Activated T-helper 1 cell treated with anti-CD3 and anti-CD28 coated beads, Interleukin-12 subunit alpha, Interleukin-12 subunit beta, Interleukin-2, Interleukin-4 antibody, amounts not matched to agents 30 ng/mL and 10 ng/mL and 1 ng/mL, durations not matched to agents 14 hours and 24 hours and 36 hours (primary cell): ENCODE measurements at regions of chr1 and their contacts with region 1.

Region 1: GRCh38 chr1:8423650-8424538 is 106.0 kb downstream of the SLC45A1 start:
- DNase-seq: peak; percentile 32
- H3K4me3 Mint-ChIP-seq: peak overlapping the region; percentile 91
- H3K27ac Mint-ChIP-seq: peak overlapping the region; percentile 92
- H3K4me1 Mint-ChIP-seq: peaks cover 44% of the 10 kb centered on the region
- H3K27me3 Mint-ChIP-seq: no peaks in the 10 kb centered on the region

Region 2: GRCh38 chr1:8396786-8397406 is 27.0 kb before region 1 on chr1:
- intact Hi-C with region 1: loop called (anchors 1 kb)
- DNase-seq: no peak
- H3K4me3 Mint-ChIP-seq: no peak overlapping the region
- H3K27ac Mint-ChIP-seq: peak overlapping the region; percentile 71
- H3K4me1 Mint-ChIP-seq: peaks cover 63% of the 10 kb centered on the region
- H3K27me3 Mint-ChIP-seq: no peaks in the 10 kb centered on the region

Region 3: GRCh38 chr1:8510041-8510823 is 86.3 kb after region 1 on chr1:
- intact Hi-C with region 1: loop called (anchors 1 kb)
- DNase-seq: peak; percentile 47
- H3K4me3 Mint-ChIP-seq: peak overlapping the region; percentile 54
- H3K27ac Mint-ChIP-seq: peak overlapping the region; percentile 88
- H3K4me1 Mint-ChIP-seq: peaks cover 47% of the 10 kb centered on the region
- H3K27me3 Mint-ChIP-seq: no peaks in the 10 kb centered on the region

Region 4: DNA sequence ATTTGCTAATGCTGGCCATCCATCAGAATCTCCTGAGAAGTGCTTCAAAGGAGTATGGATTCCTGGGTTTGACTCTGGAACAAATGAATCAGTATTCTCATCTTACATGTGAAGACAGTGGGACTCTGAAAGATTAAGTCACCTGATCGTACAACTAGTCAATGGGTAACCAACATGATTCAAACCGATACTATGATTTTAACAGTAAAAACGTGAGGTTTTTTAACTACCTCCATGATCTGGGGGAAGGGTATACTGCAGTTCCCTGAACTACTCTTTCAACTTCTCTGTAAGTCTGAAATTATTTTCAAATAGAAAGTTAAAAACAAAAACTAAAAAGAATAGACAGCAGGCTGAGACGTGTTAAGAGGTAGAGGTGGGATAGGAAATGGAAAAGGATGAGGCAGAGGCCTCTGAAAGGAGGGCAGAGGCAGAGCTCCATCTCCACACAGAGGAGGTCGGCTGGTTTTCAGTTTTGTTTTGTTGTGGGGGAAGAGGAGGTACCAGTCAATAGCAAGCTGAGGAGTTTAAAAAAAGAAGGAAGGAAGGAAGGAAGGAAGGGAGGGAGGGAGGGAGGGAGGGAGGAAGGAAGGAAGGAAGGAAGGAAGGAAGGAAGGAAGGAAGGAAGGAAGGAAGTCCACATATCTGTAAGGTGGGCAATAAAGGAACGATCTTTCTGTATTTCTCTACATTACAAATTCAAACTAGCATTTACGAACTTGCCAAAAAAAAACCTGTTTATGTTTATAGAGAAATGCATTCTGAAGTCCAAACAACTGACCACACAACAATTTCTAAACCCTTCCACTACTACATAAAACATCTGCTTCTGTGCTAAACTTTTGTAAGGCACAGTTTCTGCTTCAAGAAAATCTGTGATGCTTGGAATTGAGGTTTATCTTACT is 180.4 kb after region 1 on chr1:
- intact Hi-C with region 1: loop called (anchors 2 kb)
- DNase-seq: peak; percentile 34
- H3K4me3 Mint-ChIP-seq: peak overlapping the region; percentile 61
- H3K27ac Mint-ChIP-seq: peak overlapping the region; percentile 94
- H3K4me1 Mint-ChIP-seq: peaks cover 48% of the 10 kb centered on the region
- H3K27me3 Mint-ChIP-seq: no peaks in the 10 kb centered on the region

Region 5: GRCh38 chr1:8727809-8728213 is 303.9 kb after region 1 on chr1:
- intact Hi-C with region 1: no loop called
- DNase-seq: no peak
- H3K4me3 Mint-ChIP-seq: no peak overlapping the region
- H3K27ac Mint-ChIP-seq: no peak overlapping the region
- H3K4me1 Mint-ChIP-seq: peaks cover 24% of the 10 kb centered on the region
- H3K27me3 Mint-ChIP-seq: no peaks in the 10 kb centered on the region